HepG2 (cell line): ENCODE measurements at regions of chr7 and their contacts with region 1.

Region 1: GRCh38 chr7:38178004-38178694 is at the start of gene STARD3NL:
- DNase-seq: peak; percentile 99
- ATAC-seq: peak; percentile 99
- H3K4me3 ChIP-seq: peak within 1 kb of the TSS; percentile 81 to 94 (median 85)
- H3K27ac ChIP-seq: peak within 1 kb of the TSS; percentile 66
- H3K4me1 ChIP-seq: peaks cover 18% of the 10 kb centered on the region
- H3K27me3 ChIP-seq: no peaks in the 10 kb centered on the region; a peak in 1 of 5 replicates
- CTCF ChIP-seq: no peak
- EP300 ChIP-seq: no peak
- POLR2A ChIP-seq: peak; percentile 62 to 71
- RAD21 ChIP-seq: no peak
- total RNA-seq, gene STARD3NL: 38.2 and 42.3 TPM in 2 replicates

Region 2: DNA sequence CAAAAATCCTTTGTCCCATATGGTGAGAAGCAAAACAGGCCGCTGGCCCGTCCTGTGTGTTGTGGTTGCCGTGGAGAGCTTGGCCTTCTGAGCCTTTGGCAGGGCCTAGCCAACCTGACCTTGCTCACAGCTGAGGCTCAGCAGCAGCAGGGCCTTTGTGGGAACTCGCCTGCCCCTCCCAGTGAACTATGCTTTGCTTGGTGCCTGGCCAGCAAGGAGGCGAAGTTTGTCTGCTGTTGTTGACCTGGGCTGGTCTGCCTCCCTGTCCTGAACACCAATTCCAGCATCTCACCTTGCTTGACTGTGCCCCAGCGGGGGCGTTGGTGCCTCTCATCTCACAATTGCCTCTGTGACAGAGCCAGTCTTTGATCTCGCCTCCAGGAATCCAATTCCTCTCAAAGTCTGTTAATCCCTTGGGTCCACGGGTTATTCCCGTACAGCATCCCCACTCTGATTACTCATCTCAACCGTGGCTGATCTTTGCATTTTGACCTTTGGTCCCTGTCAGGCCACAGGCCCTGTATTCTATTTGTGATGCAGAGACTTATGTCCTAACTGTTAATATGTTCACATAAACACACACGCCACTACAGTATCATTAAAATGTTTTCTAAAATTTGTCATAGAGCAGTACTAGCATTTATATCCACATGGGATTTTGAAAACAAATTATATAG is 235.1 kb before region 1 on chr7:
- CTCF ChIA-PET with region 1: no interaction called
- POLR2A ChIA-PET with region 1: interaction called, 6 read pairs
- in situ Hi-C with region 1: no loop called
- intact Hi-C with region 1: loop called (anchors 1 kb)
- DNase-seq: peak; percentile 100
- ATAC-seq: peak; percentile 97
- H3K4me3 ChIP-seq: peak overlapping the region; percentile 22 to 44 (median 32); a peak in 4 of 6 replicates
- H3K27ac ChIP-seq: peak overlapping the region; percentile 99
- H3K4me1 ChIP-seq: peaks cover 74% of the 10 kb centered on the region
- H3K27me3 ChIP-seq: no peaks in the 10 kb centered on the region
- CTCF ChIP-seq: peak; percentile 61
- EP300 ChIP-seq: peak; percentile 97
- POLR2A ChIP-seq: peak; percentile 58 to 91; a peak in 3 of 4 replicates
- RAD21 ChIP-seq: peak; percentile 75; the same call in 1 of the 2 replicates

Region 3: GRCh38 chr7:38107486-38107893 is 70.7 kb before region 1 on chr7:
- CTCF ChIA-PET with region 1: no interaction called
- POLR2A ChIA-PET with region 1: no interaction called
- in situ Hi-C with region 1: no loop called
- intact Hi-C with region 1: loop called (anchors 1 kb)
- DNase-seq: peak; percentile 55
- ATAC-seq: peak; percentile 95
- H3K4me3 ChIP-seq: no peak overlapping the region
- H3K27ac ChIP-seq: no peak overlapping the region
- H3K4me1 ChIP-seq: no peaks in the 10 kb centered on the region
- H3K27me3 ChIP-seq: no peaks in the 10 kb centered on the region
- CTCF ChIP-seq: peak; percentile 86
- EP300 ChIP-seq: no peak
- POLR2A ChIP-seq: no peak
- RAD21 ChIP-seq: peak; percentile 60

Region 4: GRCh38 chr7:38195804-38196595 is 17.9 kb after region 1 on chr7:
- CTCF ChIA-PET with region 1: no interaction called
- POLR2A ChIA-PET with region 1: interaction called, 6 read pairs
- in situ Hi-C with region 1: no loop called
- intact Hi-C with region 1: loop called (anchors 2 kb)
- DNase-seq: no peak
- ATAC-seq: no peak
- H3K4me3 ChIP-seq: no peak overlapping the region
- H3K27ac ChIP-seq: no peak overlapping the region
- H3K4me1 ChIP-seq: 0 out of 2 replicates have a peak, but pooled peaks cover 7% of the 10 kb centered on the region
- H3K27me3 ChIP-seq: no peaks in the 10 kb centered on the region
- CTCF ChIP-seq: no peak
- EP300 ChIP-seq: no peak
- POLR2A ChIP-seq: no peak
- RAD21 ChIP-seq: no peak

Region 5: DNA sequence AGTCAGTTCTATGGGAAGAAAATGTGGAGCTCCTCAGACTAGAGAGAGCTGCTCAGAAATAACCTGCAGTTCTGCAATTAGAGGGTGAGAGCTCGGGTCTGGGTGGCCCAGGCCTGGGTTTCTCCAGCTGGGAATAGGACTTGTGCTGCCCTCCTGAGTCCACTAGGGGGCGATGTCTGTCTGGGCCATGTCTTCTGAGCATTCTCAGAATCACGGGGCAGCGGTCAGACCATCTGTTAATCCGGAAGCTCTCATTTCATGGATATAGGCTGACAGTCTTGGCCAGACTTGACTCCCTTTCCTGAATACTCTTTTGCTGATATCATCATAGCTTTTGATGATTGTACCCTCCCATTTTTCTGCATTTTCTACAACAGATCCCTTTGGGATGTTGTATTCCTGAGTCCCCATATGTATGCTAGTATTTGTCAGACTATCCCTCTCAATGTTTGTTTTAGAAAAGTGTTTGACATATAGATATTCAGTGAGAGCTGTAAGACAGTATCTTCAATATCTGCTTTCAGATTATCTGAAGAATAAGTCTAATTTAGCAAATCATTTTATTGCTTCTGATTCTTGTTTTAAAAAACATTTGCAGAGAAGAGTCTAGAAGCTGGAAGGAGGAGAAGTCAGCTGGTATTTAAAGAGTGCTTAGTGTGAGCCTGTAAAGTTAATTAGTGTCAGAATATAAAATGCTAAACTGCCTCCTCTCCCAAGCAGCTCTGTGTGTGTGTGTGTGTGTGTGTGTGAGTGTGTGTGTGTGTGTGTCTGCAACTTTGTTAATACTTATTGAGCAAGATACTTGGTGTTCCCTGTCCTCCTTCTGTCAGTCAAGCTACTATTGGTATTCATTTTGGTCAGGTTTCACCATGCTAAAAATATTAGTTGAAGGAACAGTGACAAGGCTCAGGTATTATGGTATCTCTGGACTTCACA is 37.9 kb after region 1 on chr7:
- CTCF ChIA-PET with region 1: no interaction called
- POLR2A ChIA-PET with region 1: no interaction called
- in situ Hi-C with region 1: no loop called
- intact Hi-C with region 1: loop called (anchors 1 kb)
- DNase-seq: peak; percentile 27
- ATAC-seq: peak; percentile 93
- H3K4me3 ChIP-seq: no peak overlapping the region
- H3K27ac ChIP-seq: no peak overlapping the region
- H3K4me1 ChIP-seq: peaks cover 6% of the 10 kb centered on the region; the same call in 1 of the 2 replicates
- H3K27me3 ChIP-seq: no peaks in the 10 kb centered on the region
- CTCF ChIP-seq: peak; percentile 79
- EP300 ChIP-seq: no peak
- POLR2A ChIP-seq: no peak
- RAD21 ChIP-seq: no peak